Mammary epithelial cell (primary cell): ENCODE measurements at regions of chr1 and their contacts with region 1.

Region 1: DNA sequence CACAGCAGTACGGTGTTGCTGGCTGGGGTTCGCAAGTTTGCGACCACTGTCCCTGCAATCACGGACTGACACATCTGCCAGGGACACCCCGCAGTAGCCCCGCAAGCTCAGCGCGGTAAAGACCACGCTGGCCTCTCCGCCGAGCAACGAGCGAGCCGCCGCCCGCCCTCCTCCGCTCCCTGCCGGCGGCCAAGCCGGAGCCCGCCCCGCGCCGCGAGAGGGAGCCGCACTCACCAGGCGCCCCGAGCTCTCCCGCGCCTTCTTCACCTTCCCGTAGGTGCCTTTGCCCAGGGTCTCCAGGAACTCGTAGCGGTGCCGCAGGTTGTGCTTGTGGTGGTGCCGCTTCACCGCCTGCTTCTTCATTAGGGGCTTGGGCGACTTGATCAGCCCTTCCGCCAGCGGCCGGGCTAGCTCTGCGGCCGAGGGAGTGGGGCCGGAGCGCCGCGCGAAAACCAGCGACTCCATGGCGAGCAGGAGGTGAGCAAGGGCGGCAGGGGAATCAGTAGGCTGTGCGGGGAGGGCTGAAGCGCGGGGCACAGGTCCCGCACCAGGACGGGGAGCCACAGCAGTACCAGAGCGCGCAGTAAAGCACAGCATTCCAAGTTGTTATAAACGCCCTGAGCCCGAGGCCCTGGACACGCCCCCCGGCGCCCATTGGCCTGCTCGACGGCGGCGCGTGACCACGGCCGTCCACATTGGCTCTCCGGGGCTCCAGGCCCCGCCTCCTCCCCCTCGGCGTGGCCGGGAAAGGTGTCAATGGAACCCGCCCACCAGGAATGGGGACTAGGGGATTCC is at the start of gene NUAK2:
- DNase-seq: peak; percentile 88
- H3K4me3 ChIP-seq: peak within 1 kb of the TSS; percentile 58 to 92 (median 87)
- H3K27ac ChIP-seq: peak within 1 kb of the TSS; percentile 24
- H3K4me1 ChIP-seq: peaks cover 48% of the 10 kb centered on the region
- H3K27me3 ChIP-seq: no peaks in the 10 kb centered on the region
- CTCF ChIP-seq: peak in 1 of 2 donors; percentile 42
- total RNA-seq, gene NUAK2: 11.8 TPM

Region 2: GRCh38 chr1:205003393-205004131 is 317.8 kb before region 1 on chr1:
- CTCF ChIA-PET with region 1: no interaction called
- dilution Hi-C with region 1: no loop called
- in situ Hi-C with region 1: no loop called
- intact Hi-C with region 1: no loop called
- DNase-seq: no peak
- H3K4me3 ChIP-seq: no peak overlapping the region
- H3K27ac ChIP-seq: no peak overlapping the region
- H3K4me1 ChIP-seq: no peaks in the 10 kb centered on the region
- H3K27me3 ChIP-seq: peaks cover 3% of the 10 kb centered on the region
- CTCF ChIP-seq: no peak

Region 3: DNA sequence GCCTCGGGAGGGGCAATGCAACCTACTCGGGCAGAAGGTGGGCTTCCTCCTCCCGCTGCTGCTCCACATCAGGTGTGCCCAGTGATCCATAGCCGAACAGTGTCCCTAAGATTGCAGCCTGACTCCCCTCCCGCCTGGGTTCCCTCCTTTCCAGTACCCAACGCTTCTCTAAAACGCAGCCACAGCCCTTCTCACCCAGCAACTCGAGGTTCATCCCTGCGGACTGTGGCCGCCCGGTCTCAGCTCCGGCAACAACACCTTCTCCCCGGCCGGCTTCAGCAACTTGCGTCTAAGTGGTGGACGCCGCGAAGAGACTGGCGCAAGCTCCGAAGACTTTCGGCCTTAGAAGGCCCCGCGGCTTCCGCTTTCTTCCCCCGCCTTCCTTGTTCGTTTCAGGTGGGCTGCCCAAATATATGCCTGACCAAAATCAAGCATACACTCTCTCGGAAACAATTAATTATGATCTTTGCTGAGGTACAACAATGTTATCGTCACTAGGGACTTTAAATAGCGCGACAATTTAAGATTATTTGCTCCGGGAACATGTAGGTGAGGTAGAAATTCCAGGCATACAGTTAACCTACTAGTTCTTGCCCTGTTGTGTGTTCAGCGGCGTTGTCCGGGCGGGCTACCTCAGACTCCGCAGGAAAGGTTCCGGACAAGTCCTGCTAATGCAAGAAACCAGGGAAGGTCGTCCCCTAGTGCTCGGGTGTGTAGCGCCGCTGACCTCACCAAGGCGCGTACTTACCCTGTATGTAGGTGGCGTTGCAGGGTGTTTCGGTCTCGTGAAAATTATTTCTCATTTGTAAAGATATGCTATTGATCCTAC is 199.5 kb before region 1 on chr1 and contains the start of gene RBBP5:
- CTCF ChIA-PET with region 1: no interaction called
- dilution Hi-C with region 1: no loop called
- in situ Hi-C with region 1: no loop called
- intact Hi-C with region 1: loop called (anchors 5 kb)
- DNase-seq: peak; percentile 93
- H3K4me3 ChIP-seq: peak within 1 kb of the TSS; percentile 68 to 96 (median 85)
- H3K27ac ChIP-seq: peak within 1 kb of the TSS; percentile 99
- H3K4me1 ChIP-seq: peaks cover 12% of the 10 kb centered on the region
- H3K27me3 ChIP-seq: no peaks in the 10 kb centered on the region
- CTCF ChIP-seq: peak; percentile 67 to 85
- total RNA-seq, gene RBBP5: 15.2 to 17.5 TPM

Region 4: DNA sequence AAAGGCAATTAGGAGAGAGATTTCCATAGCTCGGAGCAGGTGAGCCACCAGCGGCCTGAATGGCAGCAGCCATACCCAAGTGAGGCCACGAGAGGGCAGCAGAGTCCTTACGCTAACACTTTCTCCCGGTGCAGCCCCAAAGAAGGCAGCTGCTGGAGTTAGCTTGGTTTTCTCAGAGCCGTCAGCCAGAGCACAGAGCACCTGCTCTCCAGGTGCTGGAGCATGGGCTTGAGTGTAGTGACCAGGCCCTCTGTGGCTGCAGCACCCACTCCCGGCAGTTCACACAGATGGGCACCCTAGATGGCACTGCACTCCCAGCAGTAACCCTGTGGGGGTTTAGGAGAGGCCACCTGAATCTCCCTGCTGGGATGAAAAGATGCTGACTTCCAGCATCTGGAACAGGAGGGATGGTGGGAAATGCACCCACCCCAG is 47.8 kb before region 1 on chr1:
- CTCF ChIA-PET with region 1: interaction called, 37 read pairs
- dilution Hi-C with region 1: no loop called
- in situ Hi-C with region 1: loop called (anchors 5 kb)
- intact Hi-C with region 1: loop called (anchors 1 kb)
- DNase-seq: peak; percentile 65
- H3K4me3 ChIP-seq: no peak overlapping the region
- H3K27ac ChIP-seq: no peak overlapping the region
- H3K4me1 ChIP-seq: peaks cover 29% of the 10 kb centered on the region
- H3K27me3 ChIP-seq: no peaks in the 10 kb centered on the region
- CTCF ChIP-seq: peak; percentile 99

Region 5: DNA sequence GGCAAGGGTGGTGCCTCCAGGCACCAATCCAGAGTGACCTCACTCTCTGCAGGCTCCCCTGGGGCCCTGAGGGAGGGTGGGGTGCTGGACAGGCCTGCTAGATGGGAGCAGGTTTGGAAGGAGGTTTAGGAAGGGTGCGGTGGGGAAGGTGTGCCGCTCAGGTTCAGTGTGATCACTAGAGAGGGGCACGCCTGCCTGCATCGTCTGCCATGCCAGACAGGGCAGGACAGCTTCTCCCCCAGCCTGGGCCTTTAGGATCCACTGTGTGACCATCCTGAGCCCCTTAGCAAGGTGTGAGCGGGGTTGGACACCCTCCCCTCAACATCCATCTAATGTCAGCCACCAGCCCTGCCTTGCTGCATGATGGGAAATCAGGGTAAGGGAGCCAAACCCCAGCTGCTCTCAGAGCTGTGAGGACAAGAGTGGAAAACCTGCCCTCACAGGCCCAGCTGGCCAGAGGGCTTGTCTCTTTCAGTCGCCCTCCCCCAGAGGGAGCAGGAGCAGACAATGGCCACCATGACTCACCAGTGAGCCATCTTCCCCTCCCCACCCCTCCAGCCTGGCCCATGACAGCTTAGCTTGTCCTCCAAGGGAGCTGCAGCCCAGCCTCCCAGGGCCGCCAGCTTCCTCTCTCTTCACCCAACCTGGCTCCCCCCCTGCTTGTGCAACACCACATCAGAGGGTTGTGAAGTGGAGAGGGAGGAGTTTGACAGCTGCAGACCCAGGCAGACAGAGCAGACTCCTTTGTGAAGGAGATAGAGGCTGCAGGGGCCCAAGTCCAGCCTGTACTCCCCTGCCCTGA is 36.8 kb before region 1 on chr1:
- CTCF ChIA-PET with region 1: interaction called, 6 read pairs
- dilution Hi-C with region 1: no loop called
- in situ Hi-C with region 1: loop called in 1 of 2 experiments (anchors 5 kb)
- intact Hi-C with region 1: loop called (anchors 1 kb)
- DNase-seq: peak; percentile 100
- H3K4me3 ChIP-seq: no peak overlapping the region
- H3K27ac ChIP-seq: peak overlapping the region; percentile 26
- H3K4me1 ChIP-seq: peaks cover 48% of the 10 kb centered on the region
- H3K27me3 ChIP-seq: no peaks in the 10 kb centered on the region
- CTCF ChIP-seq: peak in 1 of 2 donors; percentile 25